ENCODE measurements at regions of chr7 and their contacts with region 1.

Region 1: GRCh38 chr7:104983578-104984539 is 30.1 kb upstream of the KMT2E start:
- DNase-seq: peak; percentile 96
- H3K4me3 Mint-ChIP-seq: peak overlapping the region; percentile 98
- H3K27ac Mint-ChIP-seq: peak overlapping the region; percentile 100
- H3K4me1 Mint-ChIP-seq: peaks cover 53% of the 10 kb centered on the region
- H3K27me3 Mint-ChIP-seq: no peaks in the 10 kb centered on the region

Region 2: GRCh38 chr7:104179178-104179577 is 804.7 kb before region 1 on chr7:
- intact Hi-C with region 1: no loop called
- DNase-seq: no peak
- H3K4me3 Mint-ChIP-seq: no peak overlapping the region
- H3K27ac Mint-ChIP-seq: no peak overlapping the region
- H3K4me1 Mint-ChIP-seq: no peaks in the 10 kb centered on the region
- H3K27me3 Mint-ChIP-seq: no peaks in the 10 kb centered on the region

Region 3: DNA sequence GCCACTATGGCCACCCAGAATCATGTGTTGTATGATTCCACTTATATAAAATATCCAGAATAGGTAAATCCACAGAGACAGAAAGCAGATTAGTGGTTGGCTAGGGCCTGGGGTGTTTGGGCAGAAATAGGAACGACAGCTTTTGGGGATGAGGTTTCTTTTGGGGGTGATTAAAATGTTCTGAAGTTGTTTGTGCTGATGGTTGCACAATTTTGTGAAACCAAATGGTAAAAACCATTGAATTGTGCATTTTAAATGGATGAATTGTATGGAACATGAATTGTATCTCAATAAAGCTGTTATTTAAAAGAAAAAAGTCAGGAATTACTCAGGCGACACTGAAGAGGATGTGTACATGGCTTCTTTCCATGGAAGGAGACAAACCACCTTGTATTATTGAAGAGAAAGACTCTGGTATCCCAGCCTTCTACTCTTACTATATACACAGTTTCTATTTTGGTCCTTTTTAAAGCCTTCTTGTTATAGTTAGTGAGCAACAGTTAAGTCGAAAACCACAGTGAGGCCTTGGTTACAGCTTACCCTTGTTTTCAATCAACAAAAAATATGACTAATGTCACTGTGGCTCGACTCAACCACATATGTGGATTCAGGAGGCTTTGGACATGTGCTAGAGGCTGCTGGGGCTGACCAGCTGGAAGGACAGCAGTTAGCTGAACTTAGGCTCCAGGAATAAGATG is 27.0 kb before region 1 on chr7:
- intact Hi-C with region 1: loop called (anchors 1 kb)
- DNase-seq: peak; percentile 88
- H3K4me3 Mint-ChIP-seq: peak overlapping the region; percentile 72
- H3K27ac Mint-ChIP-seq: peak overlapping the region; percentile 100
- H3K4me1 Mint-ChIP-seq: peaks cover 50% of the 10 kb centered on the region
- H3K27me3 Mint-ChIP-seq: no peaks in the 10 kb centered on the region

Region 4: GRCh38 chr7:105013221-105013815 is 29.5 kb after region 1 on chr7:
- intact Hi-C with region 1: loop called (anchors 1 kb)
- DNase-seq: peak; percentile 98
- H3K4me3 Mint-ChIP-seq: peak overlapping the region; percentile 99
- H3K27ac Mint-ChIP-seq: peak overlapping the region; percentile 100
- H3K4me1 Mint-ChIP-seq: peaks cover 43% of the 10 kb centered on the region
- H3K27me3 Mint-ChIP-seq: peaks cover 2% of the 10 kb centered on the region

Region 5: GRCh38 chr7:105060437-105060836 is 76.6 kb after region 1 on chr7:
- intact Hi-C with region 1: loop called (anchors 5 kb)
- DNase-seq: no peak
- H3K4me3 Mint-ChIP-seq: no peak overlapping the region
- H3K27ac Mint-ChIP-seq: peak overlapping the region; percentile 45
- H3K4me1 Mint-ChIP-seq: peaks cover 26% of the 10 kb centered on the region
- H3K27me3 Mint-ChIP-seq: no peaks in the 10 kb centered on the region

Region 6: GRCh38 chr7:105429746-105430612 is 446.1 kb after region 1 on chr7:
- intact Hi-C with region 1: loop called (anchors 1 kb)
- DNase-seq: peak; percentile 83
- H3K4me3 Mint-ChIP-seq: no peak overlapping the region
- H3K27ac Mint-ChIP-seq: no peak overlapping the region
- H3K4me1 Mint-ChIP-seq: peaks cover 6% of the 10 kb centered on the region
- H3K27me3 Mint-ChIP-seq: no peaks in the 10 kb centered on the region

Measured in activated CD4-positive, alpha-beta T cell treated with anti-CD3 and anti-CD28 coated beads, Interleukin-2, amount 10 ng/mL, durations not matched to agents 24 days and 14 days (primary cell).